Common myeloid progenitor, CD34-positive (primary cell): ENCODE measurements at regions of chr12 and their contacts with region 1.

Region 1: DNA sequence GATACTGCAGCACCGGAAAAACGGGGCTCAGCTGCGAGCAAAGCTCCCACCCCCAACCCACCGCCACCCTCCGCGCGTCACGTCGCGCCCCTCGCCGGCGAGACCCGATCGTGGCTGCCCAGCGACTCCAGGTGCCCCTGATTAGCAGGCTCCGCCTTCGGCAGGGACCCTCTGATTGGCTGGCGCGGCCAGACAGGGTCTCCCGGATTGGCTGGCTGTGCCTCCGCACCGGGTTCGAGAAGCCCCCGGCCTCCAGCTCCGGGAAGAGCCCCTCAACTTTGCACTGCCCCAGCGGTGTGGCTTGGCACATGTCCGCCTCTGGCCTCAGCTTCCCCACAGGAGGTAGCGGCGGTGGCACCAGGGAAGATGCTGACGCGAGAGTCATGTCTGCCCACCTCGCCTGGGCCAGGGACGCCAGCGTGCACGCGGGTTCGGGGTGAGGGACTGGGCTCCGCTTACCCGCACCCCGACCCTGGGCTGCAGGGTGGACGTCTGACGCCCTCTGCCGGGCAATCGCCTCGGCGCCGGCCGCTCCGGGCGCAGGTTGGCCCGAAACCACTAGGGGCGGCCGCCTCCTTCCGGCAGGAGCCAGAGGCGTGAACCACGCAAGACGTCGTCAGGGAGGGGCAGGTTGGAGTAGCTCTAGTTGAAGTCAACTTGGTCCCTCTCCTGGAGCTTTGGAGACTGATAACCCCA is 498 bp upstream of the RHOF start:
- DNase-seq: peak; percentile 94 to 96 (median 96)
- H3K4me3 ChIP-seq: peak overlapping the region; percentile 37 to 85 (median 77)
- H3K27ac ChIP-seq: peak overlapping the region in 1 of 2 experiments; percentile 69
- H3K4me1 ChIP-seq: peaks cover 10 to 82% (median 77%) of the 10 kb centered on the region in 4 experiments
- H3K27me3 ChIP-seq: no peaks in the 10 kb centered on the region

Region 2: GRCh38 chr12:121697098-121697698 is 96.8 kb before region 1 on chr12:
- CTCF ChIA-PET with region 1: interaction called, 58 read pairs
- POLR2A ChIA-PET with region 1: no interaction called
- DNase-seq: peak; percentile 58 to 75 (median 60)
- H3K4me3 ChIP-seq: no peak overlapping the region
- H3K27ac ChIP-seq: no peak overlapping the region
- H3K4me1 ChIP-seq: peaks cover 0 to 3% (median 0%) of the 10 kb centered on the region in 4 experiments
- H3K27me3 ChIP-seq: no peaks in the 10 kb centered on the region

Region 3: DNA sequence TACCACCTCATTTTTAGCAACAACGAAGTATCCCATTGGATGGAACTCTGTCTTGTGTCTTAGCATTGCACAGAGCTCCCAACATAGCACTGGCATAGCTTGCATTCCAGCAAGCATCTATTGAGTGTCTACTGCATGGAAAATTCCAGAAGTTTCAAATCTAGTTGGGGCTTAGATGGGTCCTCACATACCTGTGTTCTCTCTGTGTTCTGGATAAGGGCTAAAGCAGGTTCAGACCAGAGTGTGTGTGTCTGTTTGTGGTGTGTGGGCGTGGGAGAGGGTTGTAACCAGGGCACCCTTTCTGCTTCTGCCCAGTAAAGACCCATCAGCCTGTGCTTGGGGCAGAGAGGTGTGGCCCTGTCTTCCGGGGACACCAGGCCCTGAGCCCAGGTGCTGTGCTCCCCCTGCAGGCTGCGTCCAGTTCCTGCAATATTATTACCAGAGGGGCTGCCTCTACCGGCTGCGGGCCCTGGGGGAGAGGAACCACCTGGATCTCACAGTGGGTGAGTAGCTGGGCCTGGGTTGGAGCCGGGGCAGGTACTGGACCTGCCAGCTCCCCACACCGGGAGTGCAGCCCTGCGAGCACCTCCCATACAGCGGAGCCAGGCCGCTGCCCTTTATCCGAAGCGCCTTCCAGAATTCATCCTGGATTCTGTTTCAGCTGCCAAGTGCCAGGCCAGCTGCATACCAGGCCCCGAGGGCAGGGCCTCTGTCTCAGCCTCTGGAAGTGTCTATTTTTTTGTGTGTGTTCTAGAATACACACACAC is 20.8 kb before region 1 on chr12:
- CTCF ChIA-PET with region 1: interaction called, 405 read pairs
- POLR2A ChIA-PET with region 1: interaction called, 34 read pairs
- DNase-seq: peak; percentile 62 to 76 (median 75)
- H3K4me3 ChIP-seq: no peak overlapping the region
- H3K27ac ChIP-seq: no peak overlapping the region
- H3K4me1 ChIP-seq: peaks cover 0 to 11% (median 8%) of the 10 kb centered on the region in 4 experiments
- H3K27me3 ChIP-seq: no peaks in the 10 kb centered on the region

Region 4: GRCh38 chr12:121811434-121812319 is 17.7 kb after region 1 on chr12:
- CTCF ChIA-PET with region 1: interaction called, 462 read pairs
- POLR2A ChIA-PET with region 1: interaction called, 49 read pairs
- DNase-seq: peak; percentile 52 to 86 (median 81)
- H3K4me3 ChIP-seq: peak overlapping the region in 6 of 7 experiments; percentile 32 to 66 (median 60)
- H3K27ac ChIP-seq: peak overlapping the region in 1 of 2 experiments; percentile 59
- H3K4me1 ChIP-seq: peaks cover 5 to 44% (median 38%) of the 10 kb centered on the region in 4 experiments
- H3K27me3 ChIP-seq: no peaks in the 10 kb centered on the region

Region 5: GRCh38 chr12:121839106-121839992 is 45.4 kb after region 1 on chr12:
- CTCF ChIA-PET with region 1: interaction called, 28 read pairs
- POLR2A ChIA-PET with region 1: interaction called, 3 read pairs
- DNase-seq: peak; percentile 96 to 99 (median 98)
- H3K4me3 ChIP-seq: peak overlapping the region; percentile 35 to 89 (median 83)
- H3K27ac ChIP-seq: peak overlapping the region in 1 of 2 experiments; percentile 77
- H3K4me1 ChIP-seq: peaks cover 0 to 12% (median 10%) of the 10 kb centered on the region in 4 experiments
- H3K27me3 ChIP-seq: no peaks in the 10 kb centered on the region

Region 6: GRCh38 chr12:121894633-121895032 is 100.6 kb after region 1 on chr12:
- CTCF ChIA-PET with region 1: interaction called, 90 read pairs
- POLR2A ChIA-PET with region 1: no interaction called
- DNase-seq: peak; percentile 35 to 44 (median 43)
- H3K4me3 ChIP-seq: no peak overlapping the region
- H3K27ac ChIP-seq: peak overlapping the region in 1 of 2 experiments; percentile 64
- H3K4me1 ChIP-seq: peaks cover 2 to 17% (median 5%) of the 10 kb centered on the region in 4 experiments
- H3K27me3 ChIP-seq: no peaks in the 10 kb centered on the region